HAP-1 (cell line): ENCODE measurements at regions of chr16 and their contacts with region 1.

Region 1: GRCh38 chr16:19502395-19503131 is 19.3 kb downstream of the GDE1 start:
- DNase-seq: peak; percentile 55 to 85
- H3K4me3 ChIP-seq: no peak overlapping the region
- H3K4me1 ChIP-seq: no peaks in the 10 kb centered on the region
- H3K27me3 ChIP-seq: no peaks in the 10 kb centered on the region

Region 2: GRCh38 chr16:19375561-19376158 is 126.9 kb before region 1 on chr16:
- in situ Hi-C with region 1: no loop called
- DNase-seq: peak; percentile 59 to 64
- H3K4me3 ChIP-seq: no peak overlapping the region
- H3K4me1 ChIP-seq: no peaks in the 10 kb centered on the region
- H3K27me3 ChIP-seq: no peaks in the 10 kb centered on the region

Region 3: GRCh38 chr16:19400697-19401096 is 101.9 kb before region 1 on chr16:
- in situ Hi-C with region 1: loop called (anchors 5 kb)
- DNase-seq: peak; percentile 43 to 51
- H3K4me3 ChIP-seq: no peak overlapping the region
- H3K4me1 ChIP-seq: peaks cover 7% of the 10 kb centered on the region
- H3K27me3 ChIP-seq: peaks cover 2% of the 10 kb centered on the region; the same call in 1 of the 2 replicates

Region 4: GRCh38 chr16:19607616-19608280 is 105.2 kb after region 1 on chr16:
- in situ Hi-C with region 1: no loop called
- DNase-seq: no peak
- H3K4me3 ChIP-seq: no peak overlapping the region
- H3K4me1 ChIP-seq: no peaks in the 10 kb centered on the region
- H3K27me3 ChIP-seq: no peaks in the 10 kb centered on the region